ENCODE measurements at regions of chr11 and their contacts with region 1.

Region 1: DNA sequence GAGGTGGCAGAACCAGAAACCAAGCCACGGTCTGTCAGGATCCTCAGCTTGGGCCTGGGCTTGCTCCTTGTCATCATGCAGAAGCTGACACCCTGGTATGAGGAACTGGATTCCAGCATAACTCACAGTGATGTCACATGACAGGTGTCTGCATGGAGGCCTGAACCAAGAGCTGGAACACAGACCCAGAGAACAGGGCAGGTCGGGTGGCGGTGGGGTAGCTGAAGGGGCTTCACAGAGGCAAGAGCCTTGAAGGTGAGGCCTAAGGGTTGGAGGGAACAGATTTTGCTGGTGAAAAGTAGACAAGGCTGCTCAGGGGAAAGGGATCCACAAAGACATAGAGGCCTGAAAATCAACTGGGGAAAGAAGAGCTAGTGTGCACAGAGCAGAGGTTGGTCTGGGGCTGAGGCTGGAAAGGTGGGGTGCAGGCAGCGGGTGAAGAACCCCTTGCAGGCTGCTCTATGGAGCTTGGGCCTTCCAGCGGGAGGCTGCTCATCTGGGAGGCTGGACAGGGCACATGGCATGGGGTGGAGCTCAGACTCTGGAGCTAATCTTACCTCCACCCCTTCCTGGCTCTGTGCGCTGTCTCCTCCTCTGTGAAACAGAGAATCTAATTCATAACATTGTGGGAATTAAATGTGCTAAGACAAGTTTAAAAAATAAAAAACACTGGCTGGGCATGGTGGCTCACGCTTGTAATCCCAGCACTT is 18.5 kb upstream of the RPS3 start:
- DNase-seq: no peak
- H3K4me3 ChIP-seq: no peak overlapping the region
- H3K27ac ChIP-seq: no peak overlapping the region
- H3K4me1 ChIP-seq: peaks cover under 1% of the 10 kb centered on the region
- H3K27me3 ChIP-seq: no peaks in the 10 kb centered on the region
- CTCF ChIP-seq: no peak
- POLR2A ChIP-seq: no peak

Region 2: GRCh38 chr11:75342903-75343870 is 37.7 kb before region 1 on chr11:
- CTCF ChIA-PET with region 1: interaction called, 20 read pairs
- POLR2A ChIA-PET with region 1: no interaction called
- dilution Hi-C with region 1: no loop called
- intact Hi-C with region 1: no loop called
- DNase-seq: peak; percentile 30
- H3K4me3 ChIP-seq: no peak overlapping the region
- H3K27ac ChIP-seq: no peak overlapping the region
- H3K4me1 ChIP-seq: peaks cover 69% of the 10 kb centered on the region
- H3K27me3 ChIP-seq: no peaks in the 10 kb centered on the region
- CTCF ChIP-seq: no peak
- POLR2A ChIP-seq: no peak

Region 3: GRCh38 chr11:76823481-76824078 is 1442.7 kb after region 1 on chr11:
- CTCF ChIA-PET with region 1: no interaction called
- POLR2A ChIA-PET with region 1: no interaction called
- dilution Hi-C with region 1: no loop called
- intact Hi-C with region 1: no loop called
- DNase-seq: peak; percentile 97
- H3K4me3 ChIP-seq: peak overlapping the region in 2 of 3 experiments; percentile 25 to 55
- H3K27ac ChIP-seq: peak overlapping the region; percentile 99
- H3K4me1 ChIP-seq: peaks cover 31% of the 10 kb centered on the region
- H3K27me3 ChIP-seq: no peaks in the 10 kb centered on the region
- CTCF ChIP-seq: no peak
- POLR2A ChIP-seq: peak; percentile 68